Dorsolateral prefrontal cortex (tissue), 120 donors: ENCODE measurements at regions of chr14 and their contacts with region 1.

Region 1: GRCh38 chr14:53147208-53147607 is 5.9 kb downstream of the DDHD1 start:
- DNase-seq: no peak
- H3K4me3 ChIP-seq: no peak overlapping the region
- H3K27ac ChIP-seq: no peak overlapping the region
- H3K27me3 ChIP-seq: no peaks in the 10 kb centered on the region
- CTCF ChIP-seq: no peak

Region 2: GRCh38 chr14:53109105-53110041 is 37.8 kb before region 1 on chr14:
- intact Hi-C with region 1: loop called in 1 of 2 experiments (anchors 5 kb)
- DNase-seq: no peak
- H3K4me3 ChIP-seq: peak overlapping the region in 17 of 59 donors; percentile 2 to 47 (median 18)
- H3K27ac ChIP-seq: peak overlapping the region in 6 of 59 donors; percentile 2 to 67 (median 15)
- H3K27me3 ChIP-seq: no peaks in the 10 kb centered on the region
- CTCF ChIP-seq: no peak